ENCODE measurements at regions of chr12 and their contacts with region 1.

Region 1: DNA sequence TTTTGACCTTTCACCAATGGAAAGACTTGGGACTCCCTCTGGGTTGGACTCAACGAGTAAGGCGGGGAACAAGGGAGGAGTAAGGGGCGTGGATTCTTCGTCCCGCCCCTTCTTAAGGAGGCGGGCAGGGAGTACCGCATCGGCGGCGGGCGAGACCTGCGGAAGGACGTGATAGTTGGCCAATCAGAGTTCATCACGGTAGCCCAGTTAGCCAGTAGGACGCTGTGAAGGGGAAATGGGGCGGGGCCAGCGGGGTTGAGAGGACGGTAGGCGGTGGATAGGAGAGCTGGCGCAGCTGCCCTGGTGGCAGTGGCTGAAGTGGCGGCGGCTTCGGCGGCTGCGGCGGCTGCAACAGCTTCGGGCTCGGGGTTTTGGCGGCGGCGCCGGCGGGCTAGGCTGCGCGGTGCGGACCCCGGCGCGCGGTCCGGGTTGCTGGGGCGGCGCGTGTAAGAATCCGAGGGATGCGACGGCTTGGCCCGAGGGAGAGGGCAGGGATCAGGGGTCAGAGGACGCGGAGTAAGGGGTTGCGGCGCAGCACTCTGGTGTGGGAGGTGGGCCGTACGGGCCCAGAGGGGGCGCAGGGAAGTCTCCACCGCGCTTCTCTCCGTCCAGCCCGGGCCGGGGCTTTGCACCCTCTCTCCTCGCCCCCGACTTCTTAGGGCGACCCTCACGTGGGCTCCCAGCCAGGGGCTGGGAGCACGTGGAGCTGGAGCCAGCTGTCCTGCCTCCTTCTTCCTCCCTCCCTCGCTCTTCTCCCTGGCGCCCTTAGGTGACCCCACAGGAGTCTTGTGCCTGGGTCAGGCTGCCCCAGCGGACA is at the start of gene TPCN1:
- DNase-seq: peak; percentile 97 to 100 (median 99)
- H3K4me3 ChIP-seq: peak within 1 kb of the TSS; percentile 66 to 79
- H3K4me3 Mint-ChIP-seq: peak within 1 kb of the TSS; percentile 92 to 95 (median 94)
- H3K27ac ChIP-seq: peak within 1 kb of the TSS; percentile 70
- H3K27ac Mint-ChIP-seq: peak within 1 kb of the TSS; percentile 85 to 97 (median 94)
- H3K4me1 ChIP-seq: peaks cover 39% of the 10 kb centered on the region
- H3K4me1 Mint-ChIP-seq: peaks cover 25 to 45% (median 37%) of the 10 kb centered on the region in 4 donors
- H3K27me3 ChIP-seq: no peaks in the 10 kb centered on the region
- H3K27me3 Mint-ChIP-seq: no peaks in the 10 kb centered on the region
- total RNA-seq, gene TPCN1: 79.8 to 94.2 TPM

Region 2: DNA sequence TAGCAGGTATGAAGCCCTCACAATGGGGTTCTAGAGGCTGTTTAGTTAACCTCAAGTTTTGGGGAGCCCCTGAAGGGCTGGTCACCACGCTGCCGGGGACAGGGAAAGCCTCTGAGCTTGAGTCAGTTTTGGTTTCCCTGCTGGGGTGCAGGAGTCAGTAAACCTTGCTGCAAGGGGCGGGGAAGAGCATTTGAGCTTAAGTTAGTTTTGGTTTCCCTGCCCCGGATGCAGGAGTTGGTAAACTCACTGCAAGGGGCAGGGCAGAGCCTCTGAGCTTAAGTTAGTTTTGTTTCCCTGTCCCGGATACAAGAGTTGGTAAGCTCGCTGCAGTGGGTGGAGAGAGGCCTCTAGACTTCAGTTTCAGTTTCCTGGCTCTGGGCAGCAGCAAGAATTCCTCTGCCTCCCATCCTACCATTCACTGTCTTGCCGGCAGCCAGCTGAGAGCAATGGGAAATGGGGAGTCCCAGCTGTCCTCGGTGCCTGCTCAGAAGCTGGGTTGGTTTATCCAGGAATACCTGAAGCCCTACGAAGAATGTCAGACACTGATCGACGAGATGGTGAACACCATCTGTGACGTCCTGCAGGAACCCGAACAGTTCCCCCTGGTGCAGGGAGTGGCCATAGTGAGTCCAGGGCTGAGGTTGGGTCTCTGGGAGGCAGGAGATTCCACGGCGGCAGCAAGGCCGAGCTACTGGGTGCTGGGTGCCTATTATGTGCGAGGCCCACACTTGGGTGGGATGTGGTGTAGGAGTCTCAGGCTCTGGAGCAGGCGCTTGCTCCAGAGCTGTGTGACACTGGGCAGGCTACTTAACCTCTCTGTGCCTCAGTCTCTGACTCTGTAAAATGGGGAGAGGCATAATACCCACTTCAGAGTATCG is 243.0 kb before region 1 on chr12 and contains the start of gene OAS2:
- CTCF ChIA-PET with region 1: no interaction called
- POLR2A ChIA-PET with region 1: interaction called, 8 read pairs
- intact Hi-C with region 1: loop called (anchors 1 kb)
- DNase-seq: peak; percentile 82 to 92 (median 87)
- H3K4me3 ChIP-seq: peak within 1 kb of the TSS; percentile 87 to 88
- H3K4me3 Mint-ChIP-seq: peak within 1 kb of the TSS; percentile 88 to 100 (median 99)
- H3K27ac ChIP-seq: peak within 1 kb of the TSS; percentile 91
- H3K27ac Mint-ChIP-seq: peak within 1 kb of the TSS; percentile 97 to 99 (median 99)
- H3K4me1 ChIP-seq: peaks cover 51% of the 10 kb centered on the region
- H3K4me1 Mint-ChIP-seq: peaks cover 28 to 58% (median 45%) of the 10 kb centered on the region in 4 donors
- H3K27me3 ChIP-seq: no peaks in the 10 kb centered on the region
- H3K27me3 Mint-ChIP-seq: no peaks in the 10 kb centered on the region
- total RNA-seq, gene OAS2: 73.5 to 77.4 TPM

Region 3: GRCh38 chr12:113152835-113153814 is 68.3 kb before region 1 on chr12:
- CTCF ChIA-PET with region 1: no interaction called
- POLR2A ChIA-PET with region 1: no interaction called
- intact Hi-C with region 1: no loop called
- DNase-seq: peak; percentile 70 to 85 (median 74)
- H3K4me3 ChIP-seq: peak overlapping the region in 1 of 2 donors; percentile 57
- H3K4me3 Mint-ChIP-seq: peak overlapping the region; percentile 73 to 87 (median 85)
- H3K27ac ChIP-seq: peak overlapping the region; percentile 30
- H3K27ac Mint-ChIP-seq: peak overlapping the region in 6 of 7 donors; percentile 9 to 86 (median 75)
- H3K4me1 ChIP-seq: peaks cover 20% of the 10 kb centered on the region
- H3K4me1 Mint-ChIP-seq: peaks cover 9 to 29% (median 13%) of the 10 kb centered on the region in 4 donors
- H3K27me3 ChIP-seq: peaks cover 6% of the 10 kb centered on the region
- H3K27me3 Mint-ChIP-seq: peaks cover 0 to 9% of the 10 kb centered on the region in 2 donors

Region 4: DNA sequence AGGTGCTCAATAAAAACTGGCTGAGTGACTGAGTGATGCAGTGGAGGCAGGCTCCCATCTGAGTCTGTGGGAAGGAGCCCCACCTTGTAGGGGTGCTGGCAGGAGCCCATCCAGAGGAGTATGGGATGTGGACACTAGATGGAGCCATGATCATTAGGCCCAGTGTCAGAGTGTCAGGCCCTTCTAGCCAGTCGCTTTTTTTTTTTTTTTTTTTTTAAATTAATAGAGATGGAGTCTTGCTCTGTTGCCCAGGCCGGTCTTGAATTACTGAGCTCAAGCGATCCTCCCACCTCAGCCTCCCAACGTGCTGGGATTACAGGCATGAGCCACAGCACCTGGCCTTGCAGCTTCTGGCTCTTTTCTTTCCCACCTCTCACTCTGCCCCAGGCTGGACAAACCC is 24.4 kb before region 1 on chr12:
- CTCF ChIA-PET with region 1: interaction called, 15 read pairs
- POLR2A ChIA-PET with region 1: no interaction called
- intact Hi-C with region 1: no loop called
- DNase-seq: peak; percentile 59 to 68 (median 62)
- H3K4me3 ChIP-seq: no peak overlapping the region
- H3K4me3 Mint-ChIP-seq: no peak overlapping the region
- H3K27ac ChIP-seq: no peak overlapping the region
- H3K27ac Mint-ChIP-seq: peak overlapping the region in 2 of 7 donors; percentile 46 to 73
- H3K4me1 ChIP-seq: no peaks in the 10 kb centered on the region
- H3K4me1 Mint-ChIP-seq: peaks cover 0 to 4% (median 4%) of the 10 kb centered on the region in 4 donors
- H3K27me3 ChIP-seq: no peaks in the 10 kb centered on the region
- H3K27me3 Mint-ChIP-seq: no peaks in the 10 kb centered on the region

Region 5: DNA sequence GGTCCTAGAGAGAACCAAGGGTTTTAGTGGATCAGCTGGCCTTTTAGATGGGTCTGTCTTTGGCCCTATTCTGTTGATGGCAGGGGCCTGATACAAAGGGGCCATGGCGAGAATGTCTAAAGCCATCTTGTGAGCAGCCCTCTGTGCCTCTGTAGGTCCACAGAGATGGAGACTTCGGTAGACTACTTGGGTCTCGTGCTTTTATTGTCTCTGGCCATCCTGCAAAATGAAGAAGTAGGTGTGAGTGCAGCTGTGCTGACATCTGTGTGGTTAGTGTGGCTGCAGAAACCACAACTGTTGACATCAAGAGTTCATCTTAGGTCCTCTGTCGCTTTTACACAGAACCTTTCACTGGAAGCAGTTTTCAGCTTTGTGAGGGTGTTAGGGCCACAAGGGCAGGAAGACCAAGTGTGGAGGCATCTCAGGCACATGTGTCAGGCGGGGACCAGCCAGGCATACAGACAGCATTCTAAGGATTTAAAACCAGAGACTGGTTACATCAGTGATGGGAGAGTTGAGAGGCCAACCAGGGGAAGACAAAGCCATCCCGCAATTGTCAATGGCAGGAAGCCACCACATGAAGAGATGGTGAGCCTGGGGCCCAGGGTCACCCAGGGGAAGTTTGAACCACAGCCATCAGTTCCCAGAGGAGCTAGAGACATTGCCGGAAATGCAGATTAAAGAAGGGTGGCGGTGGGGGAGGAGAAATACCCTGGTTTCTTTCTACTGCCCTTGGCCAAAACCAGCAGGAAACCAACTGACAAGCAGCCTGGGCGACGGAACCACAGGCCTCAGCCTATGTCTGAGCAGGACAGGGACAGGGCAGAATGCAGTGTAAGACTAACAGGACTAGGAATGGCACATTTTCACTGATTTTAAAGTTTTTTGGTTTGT is 13.1 kb before region 1 on chr12:
- CTCF ChIA-PET with region 1: interaction called, 4 read pairs
- POLR2A ChIA-PET with region 1: interaction called, 84 read pairs
- intact Hi-C with region 1: loop called (anchors 1 kb)
- DNase-seq: peak; percentile 68 to 78 (median 73)
- H3K4me3 ChIP-seq: no peak overlapping the region
- H3K4me3 Mint-ChIP-seq: peak overlapping the region; percentile 26 to 83 (median 74)
- H3K27ac ChIP-seq: peak overlapping the region; percentile 40
- H3K27ac Mint-ChIP-seq: peak overlapping the region; percentile 87 to 97 (median 93)
- H3K4me1 ChIP-seq: peaks cover 47% of the 10 kb centered on the region
- H3K4me1 Mint-ChIP-seq: peaks cover 24 to 54% (median 40%) of the 10 kb centered on the region in 4 donors
- H3K27me3 ChIP-seq: no peaks in the 10 kb centered on the region
- H3K27me3 Mint-ChIP-seq: no peaks in the 10 kb centered on the region

Region 6: GRCh38 chr12:113232840-113233585 is 11.6 kb after region 1 on chr12:
- CTCF ChIA-PET with region 1: interaction called, 17 read pairs
- POLR2A ChIA-PET with region 1: interaction called, 16 read pairs
- intact Hi-C with region 1: loop called (anchors 1 kb)
- DNase-seq: peak; percentile 56 to 86 (median 70)
- H3K4me3 ChIP-seq: no peak overlapping the region
- H3K4me3 Mint-ChIP-seq: peak overlapping the region; percentile 72 to 91 (median 82)
- H3K27ac ChIP-seq: peak overlapping the region; percentile 8
- H3K27ac Mint-ChIP-seq: peak overlapping the region; percentile 16 to 94 (median 82)
- H3K4me1 ChIP-seq: peaks cover 62% of the 10 kb centered on the region
- H3K4me1 Mint-ChIP-seq: peaks cover 26 to 65% (median 40%) of the 10 kb centered on the region in 4 donors
- H3K27me3 ChIP-seq: no peaks in the 10 kb centered on the region
- H3K27me3 Mint-ChIP-seq: no peaks in the 10 kb centered on the region

Region 7: GRCh38 chr12:113334786-113335540 is 113.6 kb after region 1 on chr12 and contains the start of gene SLC8B1:
- CTCF ChIA-PET with region 1: no interaction called
- POLR2A ChIA-PET with region 1: interaction called, 7 read pairs
- intact Hi-C with region 1: loop called (anchors 1 kb)
- DNase-seq: peak; percentile 75 to 85 (median 76)
- H3K4me3 ChIP-seq: peak within 1 kb of the TSS; percentile 69 to 79
- H3K4me3 Mint-ChIP-seq: peak within 1 kb of the TSS; percentile 92 to 99 (median 98)
- H3K27ac ChIP-seq: peak within 1 kb of the TSS; percentile 50
- H3K27ac Mint-ChIP-seq: peak within 1 kb of the TSS; percentile 84 to 96 (median 89)
- H3K4me1 ChIP-seq: peaks cover 21% of the 10 kb centered on the region
- H3K4me1 Mint-ChIP-seq: peaks cover 19 to 52% (median 36%) of the 10 kb centered on the region in 4 donors
- H3K27me3 ChIP-seq: no peaks in the 10 kb centered on the region
- H3K27me3 Mint-ChIP-seq: no peaks in the 10 kb centered on the region
- total RNA-seq, gene SLC8B1: 91.2 to 93.5 TPM

Region 8: GRCh38 chr12:113358381-113359132 is 137.2 kb after region 1 on chr12 and contains the start of gene PLBD2:
- CTCF ChIA-PET with region 1: no interaction called
- POLR2A ChIA-PET with region 1: no interaction called
- intact Hi-C with region 1: loop called (anchors 1 kb)
- DNase-seq: peak; percentile 92 to 95 (median 93)
- H3K4me3 ChIP-seq: peak within 1 kb of the TSS; percentile 63 to 70
- H3K4me3 Mint-ChIP-seq: peak within 1 kb of the TSS; percentile 89 to 94 (median 92)
- H3K27ac ChIP-seq: peak within 1 kb of the TSS; percentile 63
- H3K27ac Mint-ChIP-seq: peak within 1 kb of the TSS; percentile 91 to 98 (median 97)
- H3K4me1 ChIP-seq: peaks cover 19% of the 10 kb centered on the region
- H3K4me1 Mint-ChIP-seq: peaks cover 6 to 24% (median 16%) of the 10 kb centered on the region in 4 donors
- H3K27me3 ChIP-seq: no peaks in the 10 kb centered on the region
- H3K27me3 Mint-ChIP-seq: no peaks in the 10 kb centered on the region
- total RNA-seq, gene PLBD2: 15.6 to 18.4 TPM

Measured in CD4-positive, alpha-beta memory T cell (primary cell).